ENCODE measurements at regions of chr9 and their contacts with region 1.

Region 1: DNA sequence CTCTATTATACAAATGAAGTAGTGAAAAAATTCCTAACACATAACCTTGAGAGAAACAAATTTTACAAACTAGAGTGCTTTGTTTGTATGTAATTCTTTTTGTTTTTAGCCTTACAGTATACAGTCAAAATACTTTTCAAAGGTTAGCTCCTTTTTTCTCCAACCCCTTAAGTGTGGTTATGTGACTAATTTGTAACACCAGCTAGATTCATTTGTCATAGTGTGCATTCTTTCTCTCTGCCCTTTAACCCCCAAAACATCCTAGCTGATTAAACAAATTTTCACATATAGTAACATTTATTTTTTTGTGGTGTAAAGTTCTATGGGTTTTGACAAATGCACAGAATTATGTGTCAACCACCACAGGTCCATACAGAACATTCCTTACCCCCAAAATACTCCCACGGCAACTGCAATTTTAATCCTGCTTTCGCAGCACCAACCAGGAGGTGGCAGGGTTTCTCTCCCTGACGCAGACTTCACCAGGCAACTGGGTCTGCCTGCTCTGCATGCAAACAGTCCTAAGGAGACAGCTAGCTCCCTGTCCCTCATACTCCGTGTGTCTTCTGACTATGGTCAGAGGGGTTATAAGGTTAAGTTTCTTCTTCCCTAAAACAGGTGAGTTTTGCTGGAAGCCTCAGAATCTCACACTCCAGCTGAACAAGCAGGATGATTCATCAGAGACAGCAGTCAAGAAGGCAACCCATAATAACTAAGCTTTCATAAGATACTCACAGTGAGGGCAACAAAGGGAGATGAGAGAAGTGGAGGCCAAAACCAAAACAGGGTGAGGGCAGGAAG is 44.5 kb upstream of the NR5A1 start:
- DNase-seq: peak; percentile 59
- H3K4me3 ChIP-seq: no peak overlapping the region
- H3K27ac ChIP-seq: no peak overlapping the region
- H3K4me1 ChIP-seq: no peaks in the 10 kb centered on the region
- H3K27me3 ChIP-seq: peaks cover 11 to 13% of the 10 kb centered on the region in 2 experiments
- CTCF ChIP-seq: peak; percentile 61 to 62
- POLR2A ChIP-seq: no peak

Region 2: GRCh38 chr9:124532897-124533296 is 18.8 kb before region 1 on chr9:
- CTCF ChIA-PET with region 1: interaction called, 27 read pairs
- POLR2A ChIA-PET with region 1: no interaction called
- dilution Hi-C with region 1: no loop called
- intact Hi-C with region 1: no loop called
- DNase-seq: no peak
- H3K4me3 ChIP-seq: no peak overlapping the region
- H3K27ac ChIP-seq: no peak overlapping the region
- H3K4me1 ChIP-seq: no peaks in the 10 kb centered on the region
- H3K27me3 ChIP-seq: peaks cover 0 to 5% of the 10 kb centered on the region in 2 experiments
- CTCF ChIP-seq: no peak
- POLR2A ChIP-seq: no peak

Region 3: DNA sequence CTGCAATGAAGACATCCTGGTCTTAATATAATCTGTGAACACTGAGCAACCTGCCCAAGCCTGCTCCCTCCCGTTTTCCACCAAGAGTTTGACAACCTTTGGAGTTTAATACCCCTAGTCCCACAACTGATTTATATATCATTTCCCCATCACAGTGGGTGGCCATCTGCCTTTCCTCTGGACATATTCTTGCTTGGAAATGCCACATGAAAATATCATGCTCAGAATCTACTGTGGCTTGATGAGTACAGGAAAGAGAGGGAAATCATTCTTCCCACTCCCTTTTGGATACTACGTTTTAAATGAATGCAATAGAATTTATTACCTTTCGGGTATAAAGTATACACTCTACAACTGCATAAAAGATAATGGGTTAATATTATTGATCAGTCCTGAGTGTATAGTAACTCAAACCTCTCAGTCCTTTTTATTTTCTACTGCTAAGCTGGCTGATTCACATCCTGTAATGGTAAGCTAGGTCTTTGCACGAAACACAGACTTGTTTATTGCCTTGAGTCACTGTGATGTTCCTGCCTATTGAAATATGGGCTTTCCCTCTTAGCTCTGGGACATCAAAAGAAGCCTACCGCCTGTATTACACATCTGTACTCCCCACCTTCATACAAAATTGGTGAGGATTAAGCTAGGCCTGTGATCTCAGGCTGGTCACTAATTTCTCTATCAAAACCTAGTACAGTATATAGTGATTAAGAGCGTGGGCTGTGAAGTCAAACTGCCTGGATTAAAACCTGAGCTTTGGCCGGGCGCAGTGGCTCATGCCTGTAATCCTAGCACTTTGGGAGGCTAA is 23.1 kb after region 1 on chr9:
- CTCF ChIA-PET with region 1: interaction called, 14 read pairs
- POLR2A ChIA-PET with region 1: no interaction called
- dilution Hi-C with region 1: no loop called
- intact Hi-C with region 1: no loop called
- DNase-seq: peak; percentile 35
- H3K4me3 ChIP-seq: no peak overlapping the region
- H3K27ac ChIP-seq: no peak overlapping the region
- H3K4me1 ChIP-seq: peaks cover 2% of the 10 kb centered on the region
- H3K27me3 ChIP-seq: peaks cover 5% of the 10 kb centered on the region in 2 experiments
- CTCF ChIP-seq: no peak
- POLR2A ChIP-seq: no peak

Region 4: DNA sequence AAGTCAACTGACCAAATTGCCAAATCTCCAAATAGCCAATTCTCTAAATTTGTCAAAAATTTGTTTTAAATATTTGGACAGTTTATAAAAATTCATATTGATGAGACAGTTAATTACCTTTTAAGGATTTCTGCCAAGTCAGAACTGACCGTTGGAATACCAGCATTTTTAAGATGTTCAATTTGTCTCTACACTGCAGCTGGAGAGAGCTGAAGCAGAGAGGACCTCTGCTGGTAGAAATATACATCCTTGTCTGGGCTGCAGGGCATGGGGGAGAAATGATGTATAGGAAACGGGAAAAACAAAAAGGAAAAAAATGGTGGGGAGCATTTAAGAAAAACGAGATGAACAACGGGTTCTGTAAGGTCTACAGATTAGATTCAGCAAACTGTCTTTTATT is 202.6 kb after region 1 on chr9:
- CTCF ChIA-PET with region 1: interaction called, 9 read pairs
- POLR2A ChIA-PET with region 1: no interaction called
- dilution Hi-C with region 1: no loop called
- intact Hi-C with region 1: loop called (anchors 1 kb)
- DNase-seq: peak; percentile 33
- H3K4me3 ChIP-seq: no peak overlapping the region
- H3K27ac ChIP-seq: no peak overlapping the region
- H3K4me1 ChIP-seq: no peaks in the 10 kb centered on the region
- H3K27me3 ChIP-seq: peaks cover 30 to 52% of the 10 kb centered on the region in 2 experiments
- CTCF ChIP-seq: peak in 1 of 2 donors; percentile 34
- POLR2A ChIP-seq: no peak

Region 5: DNA sequence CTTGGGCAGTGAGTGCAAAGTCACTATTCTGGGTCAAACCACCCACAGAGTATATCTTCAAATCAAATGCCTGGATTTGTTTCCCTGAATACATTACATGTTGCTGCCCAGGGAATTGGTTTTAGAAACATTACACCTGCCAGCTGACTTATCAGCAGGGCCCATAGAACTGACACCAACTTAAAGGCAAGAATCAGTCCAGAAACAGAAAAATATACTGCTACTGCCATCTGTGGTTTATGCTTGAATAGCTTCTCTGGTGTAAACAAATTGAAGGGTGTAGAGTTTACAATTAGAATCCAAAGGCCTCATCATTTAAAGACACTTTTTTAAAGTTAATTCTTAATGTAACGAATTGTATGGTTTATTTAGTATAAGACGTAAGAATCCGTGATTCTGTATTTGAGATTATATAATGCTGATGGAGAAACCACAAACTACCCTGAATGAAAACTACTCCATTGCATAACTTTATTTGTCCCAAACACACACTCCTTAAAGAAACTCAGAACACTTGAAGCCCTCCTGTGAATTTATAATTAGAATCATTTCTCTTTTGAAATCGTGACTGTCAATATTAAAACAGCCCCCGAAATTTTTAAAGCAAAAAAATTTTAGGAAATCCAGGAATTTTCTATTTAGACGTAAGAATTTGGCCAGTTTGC is 213.2 kb after region 1 on chr9:
- CTCF ChIA-PET with region 1: interaction called, 51 read pairs
- POLR2A ChIA-PET with region 1: no interaction called
- dilution Hi-C with region 1: no loop called
- intact Hi-C with region 1: loop called (anchors 5 kb)
- DNase-seq: peak; percentile 47
- H3K4me3 ChIP-seq: no peak overlapping the region
- H3K27ac ChIP-seq: no peak overlapping the region
- H3K4me1 ChIP-seq: peaks cover 5% of the 10 kb centered on the region
- H3K27me3 ChIP-seq: peaks cover 57 to 91% of the 10 kb centered on the region in 2 experiments
- CTCF ChIP-seq: peak in 1 of 2 donors; percentile 19
- POLR2A ChIP-seq: no peak